ENCODE measurements at regions of chr3 and their contacts with region 1.

Region 1: GRCh38 chr3:97793420-97794019 is 28.3 kb upstream of the CRYBG3 start:
- DNase-seq: no peak
- H3K4me3 ChIP-seq: no peak overlapping the region
- H3K27ac ChIP-seq: no peak overlapping the region
- H3K4me1 ChIP-seq: no peaks in the 10 kb centered on the region
- H3K27me3 ChIP-seq: no peaks in the 10 kb centered on the region
- CTCF ChIP-seq: peak; percentile 23 to 85 (median 69)
- POLR2A ChIP-seq: no peak

Region 2: DNA sequence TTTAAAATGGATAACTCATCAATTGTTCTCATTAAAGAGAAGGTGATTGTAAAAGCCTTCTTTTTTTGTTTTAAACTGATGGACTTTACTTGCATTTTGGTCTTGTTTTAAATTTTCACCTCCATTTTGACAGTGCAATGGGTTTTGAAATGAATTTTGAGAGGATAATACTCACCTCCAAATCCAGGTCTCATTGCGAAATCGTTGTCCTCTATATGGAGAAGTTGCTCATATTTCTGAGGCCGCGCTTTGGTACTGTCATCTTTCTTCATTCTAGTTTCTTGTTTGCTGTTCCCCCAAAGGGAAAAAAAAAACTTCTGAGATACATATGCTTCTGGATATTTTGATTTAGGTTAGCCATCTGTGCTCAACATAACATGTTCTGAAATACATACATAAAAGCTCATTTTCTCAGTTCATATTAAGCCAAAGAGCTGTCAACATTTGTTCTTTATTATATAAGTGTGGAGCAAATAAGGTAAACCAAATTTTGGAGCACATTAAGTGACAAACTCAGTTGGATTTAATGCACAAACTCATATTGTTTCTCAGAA is 231.9 kb after region 1 on chr3:
- intact Hi-C with region 1: loop called (anchors 2 kb)
- DNase-seq: no peak
- H3K4me3 ChIP-seq: no peak overlapping the region
- H3K27ac ChIP-seq: no peak overlapping the region
- H3K4me1 ChIP-seq: peaks cover 0 to 21% (median 0%) of the 10 kb centered on the region in 3 donors
- H3K27me3 ChIP-seq: no peaks in the 10 kb centered on the region
- CTCF ChIP-seq: no peak
- POLR2A ChIP-seq: no peak

Measured in esophagus squamous epithelium (tissue), 5 donors.